ENCODE measurements at regions of chr2 and their contacts with region 1.

Region 1: DNA sequence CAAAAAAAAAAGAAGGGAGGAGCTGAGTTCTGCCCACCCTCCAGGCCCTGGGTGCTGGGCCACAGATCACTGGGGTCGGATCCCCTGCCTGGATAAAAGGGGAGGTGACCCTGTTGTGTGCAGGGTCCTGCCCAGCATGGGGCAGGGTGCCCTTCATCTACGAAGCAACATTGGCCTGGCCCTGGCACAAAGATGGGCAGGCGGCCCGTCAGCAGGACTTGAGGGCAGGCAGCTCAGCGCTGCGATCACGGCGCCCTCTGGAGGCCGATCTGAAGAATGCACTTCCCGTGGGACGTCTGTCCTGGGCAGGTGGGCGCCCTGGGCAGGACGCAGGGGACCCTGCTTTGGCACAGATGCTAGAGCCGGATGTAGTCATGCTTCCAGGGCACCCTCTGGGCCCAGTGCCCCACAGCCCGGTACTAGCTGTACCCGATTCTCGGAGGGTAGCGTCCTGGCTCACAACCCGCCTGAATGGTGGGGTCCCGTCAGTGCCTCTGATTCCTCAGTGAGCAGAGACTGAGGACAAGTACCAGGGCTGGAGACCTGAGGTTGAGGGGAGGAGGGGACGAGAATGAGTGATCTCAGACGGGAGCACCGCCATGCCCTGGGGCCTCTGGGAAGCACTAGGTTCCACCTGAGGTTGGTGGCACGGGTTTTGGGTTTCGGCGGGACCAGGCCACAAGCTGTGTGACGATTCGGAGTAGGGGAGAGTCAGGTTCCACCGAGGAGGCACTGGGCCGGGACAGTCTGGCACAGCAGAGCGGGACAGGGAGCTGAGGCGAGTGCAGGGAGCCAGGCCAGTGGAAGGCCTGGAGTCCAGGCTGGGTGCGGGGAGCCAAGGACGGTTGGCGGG is 18.0 kb downstream of the ARID5A start:
- DNase-seq: peak; percentile 87 to 92
- ATAC-seq: peak; percentile 84
- H3K4me3 ChIP-seq: no peak overlapping the region
- H3K27ac ChIP-seq: no peak overlapping the region
- H3K4me1 ChIP-seq: no peaks in the 10 kb centered on the region
- H3K27me3 ChIP-seq: no peaks in the 10 kb centered on the region

Region 2: DNA sequence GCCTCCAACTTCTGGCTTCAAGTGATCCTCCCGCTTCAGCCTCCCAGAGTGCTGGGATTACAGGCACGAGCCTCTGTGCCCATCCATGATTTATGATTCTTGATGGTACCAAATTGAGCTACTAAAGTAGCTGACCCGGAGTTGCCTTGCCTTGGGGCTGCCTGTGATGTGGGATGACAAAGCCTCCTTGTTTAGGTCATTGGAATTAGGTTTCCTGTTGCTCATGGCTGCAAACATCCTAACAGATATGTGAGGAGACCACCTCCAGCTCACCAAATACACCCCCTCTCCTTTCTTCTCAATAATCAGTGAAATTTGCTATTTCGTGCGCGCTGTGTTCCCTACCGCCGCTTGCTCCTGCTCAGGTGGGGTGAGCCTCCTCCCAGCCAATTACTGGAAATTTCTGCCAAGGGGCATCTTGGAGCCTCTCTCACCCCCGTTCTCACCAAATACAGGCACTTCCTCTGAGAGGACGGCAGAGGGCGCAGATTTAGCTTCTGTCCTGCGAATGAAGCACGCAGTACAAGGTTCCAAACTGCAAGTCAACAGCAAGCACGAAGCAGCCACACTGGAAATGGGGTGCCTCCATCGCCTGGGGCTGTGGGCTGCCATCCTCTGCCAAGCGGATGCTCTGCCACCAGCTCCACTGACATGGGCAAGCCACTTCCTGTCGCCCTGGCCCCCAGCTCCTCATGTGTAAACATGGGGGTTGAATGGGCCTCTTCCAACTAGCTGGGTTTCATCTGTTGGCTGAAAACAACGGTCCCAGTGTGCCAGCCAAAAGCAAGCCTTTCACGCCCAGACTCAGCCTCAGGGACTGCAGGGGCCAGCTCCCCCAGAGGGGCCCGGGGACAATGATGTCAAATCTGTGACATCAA is 147.2 kb before region 1 on chr2:
- intact Hi-C with region 1: loop called in 1 of 2 experiments (anchors 5 kb)
- DNase-seq: peak; percentile 64 to 78
- ATAC-seq: peak; percentile 69
- H3K4me3 ChIP-seq: no peak overlapping the region
- H3K27ac ChIP-seq: no peak overlapping the region
- H3K4me1 ChIP-seq: peaks cover 0 to 4% of the 10 kb centered on the region in 2 donors
- H3K27me3 ChIP-seq: no peaks in the 10 kb centered on the region

Region 3: DNA sequence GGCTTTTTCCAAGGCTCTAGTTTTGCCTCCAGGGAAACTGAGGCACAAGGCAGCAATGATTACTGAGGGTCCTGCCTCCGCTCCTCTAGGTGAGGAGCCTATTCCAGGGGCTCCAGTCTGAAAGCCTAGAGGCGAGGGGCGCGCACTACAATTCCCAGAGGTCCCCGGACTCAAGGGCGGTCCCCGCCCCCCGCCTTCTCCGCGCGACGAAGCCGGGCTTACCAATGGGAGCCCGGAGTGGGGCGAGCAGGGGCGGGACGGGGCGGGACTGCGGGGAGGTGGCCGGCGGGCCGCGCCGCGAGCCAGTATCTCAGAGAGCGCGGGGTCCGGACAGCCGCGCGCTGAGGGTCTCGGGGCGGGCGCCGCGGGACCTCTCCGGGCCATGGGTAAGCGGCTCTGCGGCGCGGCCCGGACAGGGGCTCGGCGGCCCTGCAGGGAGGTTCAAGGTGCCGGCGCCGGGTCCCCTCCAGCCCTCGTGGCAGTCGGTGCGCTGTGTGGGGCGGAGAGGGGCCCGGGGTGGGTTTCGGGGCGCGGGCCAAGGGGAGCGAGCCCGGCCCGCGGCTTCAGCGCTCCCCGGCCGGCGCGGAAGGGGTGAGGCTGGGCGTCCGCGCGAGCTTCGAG is 18.0 kb before region 1 on chr2 and contains the start of gene ARID5A:
- intact Hi-C with region 1: loop called in 1 of 2 experiments (anchors 2 kb)
- DNase-seq: peak; percentile 98
- ATAC-seq: peak; percentile 81
- H3K4me3 ChIP-seq: peak within 1 kb of the TSS; percentile 59 to 90
- H3K27ac ChIP-seq: peak within 1 kb of the TSS; percentile 24 to 75
- H3K4me1 ChIP-seq: peaks cover 4 to 6% of the 10 kb centered on the region in 2 donors
- H3K27me3 ChIP-seq: no peaks in the 10 kb centered on the region
- total RNA-seq, gene ARID5A: 107 to 257 TPM

Region 4: GRCh38 chr2:96760036-96760985 is 205.8 kb after region 1 on chr2 and contains the start of gene CNNM4:
- intact Hi-C with region 1: loop called in 1 of 2 experiments (anchors 5 kb)
- DNase-seq: peak; percentile 97 to 98
- ATAC-seq: peak; percentile 95
- H3K4me3 ChIP-seq: peak within 1 kb of the TSS; percentile 3 to 72
- H3K27ac ChIP-seq: peak within 1 kb of the TSS in 1 of 2 donors; percentile 22
- H3K4me1 ChIP-seq: peaks cover 0 to 5% of the 10 kb centered on the region in 2 donors
- H3K27me3 ChIP-seq: peaks cover 0 to 1% of the 10 kb centered on the region in 2 donors
- total RNA-seq, gene CNNM4: 7.8 to 8.1 TPM